CD8-positive, alpha-beta T cell (primary cell): ENCODE measurements at regions of chr5 and their contacts with region 1.

Region 1: DNA sequence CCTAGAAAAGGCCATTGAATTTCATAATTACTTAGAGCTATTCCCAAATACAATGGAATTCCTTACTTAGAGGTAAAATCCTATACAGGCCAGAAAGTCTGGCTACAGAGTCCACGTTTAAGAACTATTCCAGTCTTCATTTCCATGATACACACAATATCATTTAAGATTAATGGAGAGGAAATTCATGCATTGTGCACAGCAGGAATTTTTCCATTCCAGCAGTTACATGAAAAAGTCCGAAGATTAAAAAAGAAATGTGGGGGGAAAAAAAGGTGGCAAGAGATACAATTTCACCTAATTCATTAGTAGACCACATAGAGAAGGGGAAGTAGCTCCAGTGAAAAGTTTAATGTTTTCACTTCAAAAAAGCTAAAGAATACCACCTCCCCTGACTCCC is 63.1 kb downstream of the CHD1 start:
- DNase-seq: no peak
- ATAC-seq: no peak
- H3K4me3 ChIP-seq: no peak overlapping the region
- H3K4me3 Mint-ChIP-seq: no peak overlapping the region
- H3K27ac ChIP-seq: no peak overlapping the region
- H3K27ac Mint-ChIP-seq: no peak overlapping the region
- H3K4me1 ChIP-seq: no peaks in the 10 kb centered on the region
- H3K4me1 Mint-ChIP-seq: no peaks in the 10 kb centered on the region
- H3K27me3 ChIP-seq: no peaks in the 10 kb centered on the region
- H3K27me3 Mint-ChIP-seq: no peaks in the 10 kb centered on the region
- CTCF ChIP-seq: no peak

Region 2: DNA sequence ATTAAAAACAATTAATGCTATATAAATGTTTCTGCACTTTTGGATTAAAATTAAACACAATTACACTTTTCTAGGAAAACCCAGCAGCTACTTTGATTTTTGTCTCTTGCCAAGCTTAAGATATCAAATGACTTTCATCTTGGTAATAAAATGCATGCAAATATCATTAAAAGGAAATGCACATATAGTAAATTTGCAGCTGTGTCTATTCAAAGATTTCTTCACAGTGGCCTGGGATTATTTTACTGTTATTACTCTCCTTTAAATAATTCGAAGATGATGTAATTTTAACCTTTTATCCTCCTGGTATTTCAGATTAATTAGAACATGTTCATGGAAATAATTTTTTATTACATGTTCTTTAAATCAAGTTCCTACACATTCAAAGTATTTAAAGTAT is 621.7 kb before region 1 on chr5:
- CTCF ChIA-PET with region 1: no interaction called
- POLR2A ChIA-PET with region 1: no interaction called
- intact Hi-C with region 1: no loop called
- DNase-seq: no peak
- ATAC-seq: no peak
- H3K4me3 ChIP-seq: no peak overlapping the region
- H3K4me3 Mint-ChIP-seq: no peak overlapping the region
- H3K27ac ChIP-seq: no peak overlapping the region
- H3K27ac Mint-ChIP-seq: no peak overlapping the region
- H3K4me1 ChIP-seq: no peaks in the 10 kb centered on the region
- H3K4me1 Mint-ChIP-seq: no peaks in the 10 kb centered on the region
- H3K27me3 ChIP-seq: no peaks in the 10 kb centered on the region
- H3K27me3 Mint-ChIP-seq: peaks cover 3% of the 10 kb centered on the region
- CTCF ChIP-seq: no peak

Region 3: DNA sequence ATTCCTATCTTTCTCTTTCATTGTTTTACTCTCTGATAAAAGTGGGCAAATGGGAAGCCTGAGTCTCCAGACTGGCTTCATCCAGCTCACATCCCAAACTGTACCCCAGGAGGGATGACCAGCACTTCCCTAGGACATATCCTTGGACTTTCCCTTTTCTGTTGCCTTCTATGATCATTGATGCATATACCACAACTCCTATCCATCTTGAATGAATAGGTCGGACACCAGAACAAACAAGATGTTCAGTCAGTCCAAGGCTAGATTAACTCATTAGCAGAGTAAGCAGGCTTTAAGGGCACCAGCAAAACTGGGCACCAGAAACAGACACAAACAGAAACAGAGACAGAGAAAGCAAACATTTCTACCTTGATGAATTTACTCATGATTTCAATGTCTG is 251.3 kb before region 1 on chr5:
- CTCF ChIA-PET with region 1: no interaction called
- POLR2A ChIA-PET with region 1: no interaction called
- intact Hi-C with region 1: no loop called
- DNase-seq: no peak
- ATAC-seq: no peak
- H3K4me3 ChIP-seq: no peak overlapping the region
- H3K4me3 Mint-ChIP-seq: no peak overlapping the region
- H3K27ac ChIP-seq: no peak overlapping the region
- H3K27ac Mint-ChIP-seq: no peak overlapping the region
- H3K4me1 ChIP-seq: no peaks in the 10 kb centered on the region
- H3K4me1 Mint-ChIP-seq: no peaks in the 10 kb centered on the region
- H3K27me3 ChIP-seq: no peaks in the 10 kb centered on the region
- H3K27me3 Mint-ChIP-seq: no peaks in the 10 kb centered on the region
- CTCF ChIP-seq: no peak

Region 4: GRCh38 chr5:98880151-98880550 is 14.5 kb after region 1 on chr5:
- CTCF ChIA-PET with region 1: interaction called, 4 read pairs
- POLR2A ChIA-PET with region 1: no interaction called
- intact Hi-C with region 1: loop called in 1 of 2 experiments (anchors 2 kb)
- DNase-seq: no peak
- ATAC-seq: peak; percentile 11
- H3K4me3 ChIP-seq: no peak overlapping the region
- H3K4me3 Mint-ChIP-seq: no peak overlapping the region
- H3K27ac ChIP-seq: no peak overlapping the region
- H3K27ac Mint-ChIP-seq: no peak overlapping the region
- H3K4me1 ChIP-seq: no peaks in the 10 kb centered on the region
- H3K4me1 Mint-ChIP-seq: peaks cover 21% of the 10 kb centered on the region
- H3K27me3 ChIP-seq: no peaks in the 10 kb centered on the region
- H3K27me3 Mint-ChIP-seq: no peaks in the 10 kb centered on the region
- CTCF ChIP-seq: no peak

Region 5: DNA sequence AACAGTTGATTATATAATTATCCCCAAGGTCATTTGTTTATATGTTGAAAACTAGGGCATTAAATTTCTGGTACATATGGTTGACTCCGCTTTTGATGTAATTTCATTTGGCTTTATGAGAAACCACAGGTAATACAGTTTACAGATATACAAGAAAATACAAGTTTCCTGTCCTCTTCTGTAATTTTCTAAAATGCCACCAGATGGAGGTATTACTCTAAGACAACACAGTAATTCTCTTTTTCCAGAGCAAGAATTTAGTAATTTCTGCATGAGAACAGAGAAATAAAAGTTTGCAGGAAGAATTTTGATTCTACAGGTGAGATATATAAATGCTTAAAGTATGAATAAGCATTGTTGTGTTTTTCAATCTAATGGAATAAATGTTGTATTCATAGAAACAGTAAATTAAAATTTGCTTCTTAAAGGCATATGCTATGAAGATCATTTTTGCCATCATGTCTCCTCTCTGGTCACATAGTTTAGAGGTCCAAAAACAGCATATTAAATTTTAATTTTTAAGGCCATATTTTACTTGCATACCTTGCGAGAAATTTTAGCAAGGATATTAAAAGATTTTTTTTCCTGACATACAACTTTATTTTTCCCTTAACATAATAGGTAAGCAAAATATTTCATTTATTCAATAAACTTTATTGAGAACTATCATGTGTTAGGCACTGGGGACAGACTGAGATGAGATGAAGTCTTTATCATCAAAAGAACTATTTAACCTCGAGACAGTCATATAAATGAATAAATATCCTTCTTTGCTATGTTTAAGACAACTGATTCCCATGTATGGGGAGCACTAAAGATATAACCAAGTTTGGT is 40.4 kb after region 1 on chr5:
- CTCF ChIA-PET with region 1: no interaction called
- POLR2A ChIA-PET with region 1: no interaction called
- intact Hi-C with region 1: loop called in 1 of 2 experiments (anchors 5 kb)
- DNase-seq: peak in 2 of 9 experiments; percentile 62 to 72
- ATAC-seq: peak; percentile 67
- H3K4me3 ChIP-seq: no peak overlapping the region
- H3K4me3 Mint-ChIP-seq: no peak overlapping the region
- H3K27ac ChIP-seq: peak overlapping the region in 1 of 2 experiments; percentile 34
- H3K27ac Mint-ChIP-seq: no peak overlapping the region
- H3K4me1 ChIP-seq: peaks cover 20% of the 10 kb centered on the region
- H3K4me1 Mint-ChIP-seq: peaks cover 51% of the 10 kb centered on the region
- H3K27me3 ChIP-seq: no peaks in the 10 kb centered on the region
- H3K27me3 Mint-ChIP-seq: no peaks in the 10 kb centered on the region
- CTCF ChIP-seq: peak; percentile 96

Region 6: DNA sequence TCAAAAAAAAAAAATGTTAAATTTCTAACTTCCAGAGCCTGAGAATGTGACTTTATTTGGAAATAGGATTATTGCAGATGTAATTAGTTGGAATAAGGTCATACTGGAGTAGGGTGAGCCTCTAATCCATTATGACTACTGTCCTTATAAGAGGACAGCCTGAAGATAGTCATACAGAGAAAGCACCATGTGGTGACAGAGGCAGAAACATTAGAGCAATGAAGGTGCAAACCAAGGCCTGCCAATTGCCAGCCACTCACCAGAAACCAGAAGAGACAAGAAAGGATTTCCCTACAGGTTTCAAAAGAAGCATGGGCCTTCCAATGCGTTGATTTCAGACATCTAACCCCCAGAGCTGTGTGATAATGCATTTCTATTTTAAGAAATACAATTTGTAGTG is 722.3 kb after region 1 on chr5:
- CTCF ChIA-PET with region 1: no interaction called
- POLR2A ChIA-PET with region 1: no interaction called
- intact Hi-C with region 1: no loop called
- DNase-seq: no peak
- ATAC-seq: no peak
- H3K4me3 ChIP-seq: no peak overlapping the region
- H3K4me3 Mint-ChIP-seq: no peak overlapping the region
- H3K27ac ChIP-seq: no peak overlapping the region
- H3K27ac Mint-ChIP-seq: no peak overlapping the region
- H3K4me1 ChIP-seq: no peaks in the 10 kb centered on the region
- H3K4me1 Mint-ChIP-seq: no peaks in the 10 kb centered on the region
- H3K27me3 ChIP-seq: no peaks in the 10 kb centered on the region
- H3K27me3 Mint-ChIP-seq: no peaks in the 10 kb centered on the region
- CTCF ChIP-seq: no peak